Heart left ventricle (tissue), 16 donors: ENCODE measurements at regions of chr10 and their contacts with region 1.

Region 1: GRCh38 chr10:18340496-18341051 is 200.3 kb downstream of the CACNB2 start:
- DNase-seq: peak in 4 of 5 donors; percentile 27 to 78 (median 52)
- ATAC-seq: peak; percentile 84 to 95 (median 90)
- H3K4me3 ChIP-seq: peak overlapping the region; percentile 41 to 75 (median 56)
- H3K27ac ChIP-seq: peak overlapping the region; percentile 47 to 89 (median 80)
- H3K4me1 ChIP-seq: peaks cover 0 to 6% (median 0%) of the 10 kb centered on the region in 12 donors
- H3K27me3 ChIP-seq: no peaks in the 10 kb centered on the region
- CTCF ChIP-seq: no peak
- POLR2A ChIP-seq: peak in 1 of 2 donors; percentile 72

Region 2: DNA sequence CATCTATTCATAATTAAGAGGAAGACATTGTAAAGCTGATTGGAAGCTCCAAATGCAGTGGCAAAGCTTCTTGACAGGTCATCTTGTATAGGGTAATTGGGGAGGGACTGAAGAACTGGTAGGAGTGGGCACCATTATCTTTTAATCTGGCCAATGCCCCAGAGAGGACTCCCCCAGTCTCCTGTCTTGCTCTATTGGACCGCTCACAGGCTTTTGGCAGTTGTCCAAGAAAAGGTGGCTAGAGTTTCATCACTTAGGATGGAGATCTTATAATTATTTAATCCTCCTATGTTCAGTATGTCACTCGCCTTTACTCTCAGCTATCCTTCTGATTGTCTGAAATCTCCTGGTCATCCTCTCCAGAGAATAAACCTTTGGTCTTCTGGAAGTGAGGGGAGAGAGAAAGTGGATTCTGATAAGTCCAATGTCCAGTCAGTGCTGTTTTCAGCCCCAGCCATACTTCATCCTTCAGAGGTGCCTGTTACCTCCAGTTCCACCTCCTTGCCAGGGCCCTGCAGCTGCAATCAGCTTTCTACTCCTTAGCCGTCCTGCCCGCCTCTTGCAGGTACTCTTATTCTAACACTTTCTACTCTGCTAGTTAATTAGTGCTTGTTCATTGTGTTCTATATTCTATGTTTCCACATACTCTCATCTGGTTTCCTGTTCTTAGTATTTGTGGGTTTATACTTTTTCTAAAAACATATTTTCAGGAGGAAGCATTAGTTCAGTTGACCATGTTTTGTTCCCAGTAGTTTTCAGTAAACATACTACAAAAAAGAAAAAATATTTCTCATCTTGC is 69.2 kb after region 1 on chr10:
- intact Hi-C with region 1: loop called in 1 of 10 experiments (anchors 5 kb)
- DNase-seq: no peak
- ATAC-seq: no peak
- H3K4me3 ChIP-seq: no peak overlapping the region
- H3K27ac ChIP-seq: peak overlapping the region in 1 of 12 donors; percentile 24
- H3K4me1 ChIP-seq: peaks cover 0 to 28% (median 3%) of the 10 kb centered on the region in 12 donors
- H3K27me3 ChIP-seq: no peaks in the 10 kb centered on the region
- CTCF ChIP-seq: no peak
- POLR2A ChIP-seq: no peak

Region 3: GRCh38 chr10:18463673-18464211 is 123.2 kb after region 1 on chr10:
- intact Hi-C with region 1: loop called in 2 of 10 experiments (anchors 5 to 10 kb)
- DNase-seq: peak in 4 of 5 donors; percentile 23 to 69 (median 47)
- ATAC-seq: peak; percentile 83 to 92 (median 87)
- H3K4me3 ChIP-seq: no peak overlapping the region
- H3K27ac ChIP-seq: peak overlapping the region in 11 of 12 donors; percentile 47 to 86 (median 79)
- H3K4me1 ChIP-seq: peaks cover 0 to 31% (median 4%) of the 10 kb centered on the region in 12 donors
- H3K27me3 ChIP-seq: no peaks in the 10 kb centered on the region
- CTCF ChIP-seq: no peak
- POLR2A ChIP-seq: no peak

Region 4: GRCh38 chr10:18472977-18473376 is 132.4 kb after region 1 on chr10:
- intact Hi-C with region 1: loop called in 4 of 10 experiments (anchors 5 to 10 kb)
- DNase-seq: peak in 2 of 5 donors; percentile 25 to 53
- ATAC-seq: peak in 3 of 4 donors; percentile 7 to 52 (median 40)
- H3K4me3 ChIP-seq: peak overlapping the region in 2 of 12 donors; percentile 9 to 16
- H3K27ac ChIP-seq: peak overlapping the region; percentile 76 to 93 (median 85)
- H3K4me1 ChIP-seq: peaks cover 0 to 36% (median 14%) of the 10 kb centered on the region in 12 donors
- H3K27me3 ChIP-seq: no peaks in the 10 kb centered on the region
- CTCF ChIP-seq: peak in 7 of 12 donors; percentile 10 to 39 (median 27)
- POLR2A ChIP-seq: no peak

Region 5: GRCh38 chr10:18659120-18659818 is 318.7 kb after region 1 on chr10 and contains the start of gene ARL5B:
- intact Hi-C with region 1: loop called in 2 of 10 experiments (anchors 5 to 10 kb)
- DNase-seq: peak; percentile 99
- ATAC-seq: peak; percentile 99 to 100 (median 99)
- H3K4me3 ChIP-seq: peak within 1 kb of the TSS; percentile 61 to 99 (median 92)
- H3K27ac ChIP-seq: peak within 1 kb of the TSS; percentile 74 to 99 (median 93)
- H3K4me1 ChIP-seq: peaks cover 3 to 35% (median 26%) of the 10 kb centered on the region in 12 donors
- H3K27me3 ChIP-seq: no peaks in the 10 kb centered on the region
- CTCF ChIP-seq: no peak
- POLR2A ChIP-seq: peak; percentile 16 to 68
- total RNA-seq, gene ARL5B: 4.7 to 10.2 (median 6.9) TPM